ENCODE measurements at regions of chr7 and their contacts with region 1.

Region 1: GRCh38 chr7:13279854-13280435 is 592.5 kb downstream of the ARL4A start:
- DNase-seq: no peak
- H3K4me3 ChIP-seq: no peak overlapping the region
- H3K27ac ChIP-seq: no peak overlapping the region
- H3K4me1 ChIP-seq: no peaks in the 10 kb centered on the region
- H3K27me3 ChIP-seq: no peaks in the 10 kb centered on the region
- CTCF ChIP-seq: peak; percentile 80

Region 2: DNA sequence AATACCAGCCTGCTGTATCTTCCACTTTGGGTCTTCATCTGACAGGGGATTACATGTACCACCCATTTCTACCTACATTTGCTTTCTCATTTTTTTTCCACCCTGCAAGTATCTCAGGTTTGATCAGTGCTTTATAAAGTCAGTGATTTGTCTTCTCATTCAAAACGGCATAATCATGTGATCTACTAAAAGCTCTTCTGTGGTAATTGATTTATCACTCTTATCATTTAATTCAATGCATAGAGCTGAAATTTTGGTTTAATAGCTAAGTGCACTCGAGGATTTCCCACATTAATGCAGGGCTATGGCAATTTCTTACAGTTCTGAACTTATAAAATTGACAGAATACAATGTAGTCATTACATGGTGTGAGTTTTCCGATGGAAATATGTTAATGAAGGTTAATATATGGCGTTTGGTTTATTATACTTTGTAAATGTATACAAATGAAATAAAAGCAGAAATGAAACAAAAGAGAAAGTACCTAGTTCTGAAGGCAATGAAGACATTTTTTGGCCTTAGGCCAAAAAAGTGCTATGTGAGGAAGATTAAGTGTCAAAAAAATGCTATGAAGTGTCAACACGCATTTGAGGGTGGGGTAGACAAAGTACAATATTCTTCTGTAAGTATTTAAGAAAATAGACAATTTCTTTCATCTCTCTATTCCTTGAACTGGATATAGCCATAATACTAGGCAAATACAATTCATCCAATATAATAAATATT is 252.2 kb after region 1 on chr7:
- CTCF ChIA-PET with region 1: no interaction called
- POLR2A ChIA-PET with region 1: no interaction called
- intact Hi-C with region 1: loop called (anchors 5 kb)
- DNase-seq: no peak
- H3K4me3 ChIP-seq: no peak overlapping the region
- H3K27ac ChIP-seq: no peak overlapping the region
- H3K4me1 ChIP-seq: no peaks in the 10 kb centered on the region
- H3K27me3 ChIP-seq: no peaks in the 10 kb centered on the region
- CTCF ChIP-seq: no peak

Region 3: GRCh38 chr7:13742811-13743210 is 462.9 kb after region 1 on chr7:
- CTCF ChIA-PET with region 1: no interaction called
- POLR2A ChIA-PET with region 1: no interaction called
- intact Hi-C with region 1: loop called (anchors 5 kb)
- DNase-seq: peak in 1 of 2 experiments; percentile 23
- H3K4me3 ChIP-seq: no peak overlapping the region
- H3K27ac ChIP-seq: no peak overlapping the region
- H3K4me1 ChIP-seq: no peaks in the 10 kb centered on the region
- H3K27me3 ChIP-seq: no peaks in the 10 kb centered on the region
- CTCF ChIP-seq: peak; percentile 64; the same call in 1 of the 2 replicates

Region 4: GRCh38 chr7:14457568-14458453 is 1177.9 kb after region 1 on chr7:
- CTCF ChIA-PET with region 1: interaction called, 3 read pairs
- POLR2A ChIA-PET with region 1: no interaction called
- intact Hi-C with region 1: loop called (anchors 2 kb)
- DNase-seq: peak; percentile 66 to 68
- H3K4me3 ChIP-seq: peak overlapping the region; percentile 6; the same call in 1 of the 2 replicates
- H3K27ac ChIP-seq: no peak overlapping the region
- H3K4me1 ChIP-seq: no peaks in the 10 kb centered on the region
- H3K27me3 ChIP-seq: no peaks in the 10 kb centered on the region
- CTCF ChIP-seq: peak; percentile 98

Region 5: DNA sequence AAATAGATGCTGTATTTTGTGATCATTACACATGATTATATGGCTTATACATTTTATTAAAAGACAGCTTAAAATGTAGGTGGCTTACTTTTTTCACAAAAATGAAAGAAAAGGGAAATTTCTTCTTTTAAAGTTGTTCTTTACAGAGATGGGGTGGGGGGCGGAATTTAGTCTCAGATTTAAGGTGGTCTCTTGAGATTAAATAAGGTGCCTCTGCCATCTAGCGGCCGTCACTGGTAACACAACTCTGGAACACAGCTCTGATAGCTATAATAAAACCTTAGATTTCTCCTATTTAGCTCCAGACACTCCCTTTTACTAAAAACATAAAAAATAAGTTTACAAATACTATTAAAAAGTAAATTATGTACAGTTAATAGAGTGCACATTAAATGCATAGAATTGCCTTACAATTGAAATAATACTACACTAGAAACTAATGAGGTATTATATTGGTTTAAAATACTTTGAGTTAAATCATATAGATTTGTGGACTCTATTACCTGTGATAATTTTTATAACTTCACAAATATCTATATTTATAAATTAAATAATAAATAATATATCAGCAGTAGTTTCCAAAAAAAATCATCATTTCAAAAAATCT is 1411.8 kb after region 1 on chr7:
- CTCF ChIA-PET with region 1: interaction called, 42 read pairs
- POLR2A ChIA-PET with region 1: interaction called, 5 read pairs
- intact Hi-C with region 1: loop called (anchors 1 kb)
- DNase-seq: peak in 1 of 2 experiments; percentile 33
- H3K4me3 ChIP-seq: no peak overlapping the region
- H3K27ac ChIP-seq: no peak overlapping the region
- H3K4me1 ChIP-seq: no peaks in the 10 kb centered on the region
- H3K27me3 ChIP-seq: no peaks in the 10 kb centered on the region
- CTCF ChIP-seq: peak; percentile 100

Measured in PC-9 (cell line).